ENCODE measurements at regions of chr12 and their contacts with region 1.

Region 1: GRCh38 chr12:93677195-93678064 is at the start of gene CRADD:
- DNase-seq: peak; percentile 66 to 99 (median 80)
- ATAC-seq: peak; percentile 94
- H3K4me3 ChIP-seq: peak within 1 kb of the TSS; percentile 71
- H3K4me3 Mint-ChIP-seq: peak within 1 kb of the TSS; percentile 97
- H3K27ac ChIP-seq: peak within 1 kb of the TSS; percentile 97 to 98
- H3K27ac Mint-ChIP-seq: peak within 1 kb of the TSS; percentile 100
- H3K4me1 ChIP-seq: peaks cover 24% of the 10 kb centered on the region
- H3K4me1 Mint-ChIP-seq: peaks cover 40% of the 10 kb centered on the region
- H3K27me3 ChIP-seq: peaks cover 7 to 9% of the 10 kb centered on the region in 2 experiments
- H3K27me3 Mint-ChIP-seq: peaks cover 15% of the 10 kb centered on the region
- CTCF ChIP-seq: no peak
- total RNA-seq, gene CRADD: 5.8 to 9.2 TPM

Region 2: GRCh38 chr12:92928962-92929915 is 748.2 kb before region 1 on chr12 and contains the start of gene EEA1:
- CTCF ChIA-PET with region 1: no interaction called
- POLR2A ChIA-PET with region 1: no interaction called
- intact Hi-C with region 1: loop called in 1 of 2 experiments (anchors 5 kb)
- DNase-seq: peak; percentile 88 to 97 (median 94)
- ATAC-seq: peak; percentile 77
- H3K4me3 ChIP-seq: peak within 1 kb of the TSS; percentile 81
- H3K4me3 Mint-ChIP-seq: peak within 1 kb of the TSS; percentile 91
- H3K27ac ChIP-seq: peak within 1 kb of the TSS; percentile 86 to 90
- H3K27ac Mint-ChIP-seq: peak within 1 kb of the TSS; percentile 94
- H3K4me1 ChIP-seq: peaks cover 23% of the 10 kb centered on the region
- H3K4me1 Mint-ChIP-seq: peaks cover 42% of the 10 kb centered on the region
- H3K27me3 ChIP-seq: no peaks in the 10 kb centered on the region
- H3K27me3 Mint-ChIP-seq: no peaks in the 10 kb centered on the region
- CTCF ChIP-seq: peak; percentile 28
- total RNA-seq, gene EEA1: 10.5 to 11.1 TPM

Region 3: GRCh38 chr12:93467351-93468007 is 210.0 kb before region 1 on chr12 and contains the start of gene MRPL42:
- CTCF ChIA-PET with region 1: interaction called, 5 read pairs
- POLR2A ChIA-PET with region 1: no interaction called
- intact Hi-C with region 1: loop called in 1 of 2 experiments (anchors 5 kb)
- DNase-seq: peak; percentile 84 to 94 (median 92)
- ATAC-seq: peak; percentile 95
- H3K4me3 ChIP-seq: peak within 1 kb of the TSS; percentile 92
- H3K4me3 Mint-ChIP-seq: peak within 1 kb of the TSS; percentile 92
- H3K27ac ChIP-seq: peak within 1 kb of the TSS; percentile 77 to 93
- H3K27ac Mint-ChIP-seq: peak within 1 kb of the TSS; percentile 95
- H3K4me1 ChIP-seq: peaks cover 25% of the 10 kb centered on the region
- H3K4me1 Mint-ChIP-seq: peaks cover 40% of the 10 kb centered on the region
- H3K27me3 ChIP-seq: no peaks in the 10 kb centered on the region
- H3K27me3 Mint-ChIP-seq: no peaks in the 10 kb centered on the region
- CTCF ChIP-seq: peak; percentile 82
- total RNA-seq, gene MRPL42: 39.0 to 39.3 TPM

Region 4: DNA sequence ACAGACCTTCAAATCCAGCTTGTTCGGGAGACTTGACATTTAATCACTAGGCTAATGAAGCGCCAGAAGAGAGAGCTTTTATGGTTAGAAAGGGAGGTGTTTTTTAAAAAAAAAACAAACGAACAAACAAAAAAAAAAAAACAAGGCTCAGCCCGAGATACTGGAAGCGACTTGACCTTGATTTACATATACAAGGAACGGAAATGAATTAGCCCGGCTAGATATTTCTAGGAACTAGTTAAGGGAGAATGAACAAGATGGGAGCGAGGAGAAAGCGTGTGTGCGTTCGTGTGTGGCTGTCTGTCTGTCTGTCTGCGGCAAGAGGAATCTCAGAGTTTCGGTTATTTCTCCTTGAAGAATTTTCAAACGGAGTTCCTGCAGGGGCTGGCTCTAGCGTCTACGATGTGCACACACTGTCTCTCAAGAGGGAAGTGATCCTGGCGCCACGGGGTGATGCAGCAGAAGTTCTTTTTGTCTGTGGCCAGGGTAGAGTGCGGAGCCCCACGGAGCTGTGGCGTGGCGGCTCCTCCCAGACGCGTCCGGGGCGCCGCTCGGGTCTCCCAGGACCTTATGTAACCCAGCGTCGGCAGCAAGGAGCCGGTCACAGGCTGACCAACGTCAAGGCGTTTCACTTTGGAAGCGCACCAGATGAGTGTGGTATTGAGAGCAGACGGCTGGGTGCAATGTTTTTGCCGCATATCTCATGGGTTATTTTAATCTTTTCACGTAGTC is 86.1 kb before region 1 on chr12:
- CTCF ChIA-PET with region 1: no interaction called
- POLR2A ChIA-PET with region 1: no interaction called
- intact Hi-C with region 1: loop called in 1 of 2 experiments (anchors 5 kb)
- DNase-seq: peak in 10 of 14 experiments; percentile 2 to 69 (median 34)
- ATAC-seq: peak; percentile 71
- H3K4me3 ChIP-seq: peak overlapping the region; percentile 49
- H3K4me3 Mint-ChIP-seq: peak overlapping the region; percentile 81
- H3K27ac ChIP-seq: no peak overlapping the region
- H3K27ac Mint-ChIP-seq: no peak overlapping the region
- H3K4me1 ChIP-seq: peaks cover 7% of the 10 kb centered on the region
- H3K4me1 Mint-ChIP-seq: peaks cover 14% of the 10 kb centered on the region
- H3K27me3 ChIP-seq: peaks cover 16 to 38% of the 10 kb centered on the region in 2 experiments
- H3K27me3 Mint-ChIP-seq: peaks cover 72% of the 10 kb centered on the region
- CTCF ChIP-seq: no peak

Region 5: GRCh38 chr12:94001691-94002090 is 324.3 kb after region 1 on chr12:
- CTCF ChIA-PET with region 1: no interaction called
- POLR2A ChIA-PET with region 1: no interaction called
- intact Hi-C with region 1: no loop called
- DNase-seq: no peak
- ATAC-seq: no peak
- H3K4me3 ChIP-seq: no peak overlapping the region
- H3K4me3 Mint-ChIP-seq: no peak overlapping the region
- H3K27ac ChIP-seq: no peak overlapping the region
- H3K27ac Mint-ChIP-seq: no peak overlapping the region
- H3K4me1 ChIP-seq: no peaks in the 10 kb centered on the region
- H3K4me1 Mint-ChIP-seq: peaks cover 7% of the 10 kb centered on the region
- H3K27me3 ChIP-seq: no peaks in the 10 kb centered on the region
- H3K27me3 Mint-ChIP-seq: peaks cover 3% of the 10 kb centered on the region
- CTCF ChIP-seq: no peak

Region 6: DNA sequence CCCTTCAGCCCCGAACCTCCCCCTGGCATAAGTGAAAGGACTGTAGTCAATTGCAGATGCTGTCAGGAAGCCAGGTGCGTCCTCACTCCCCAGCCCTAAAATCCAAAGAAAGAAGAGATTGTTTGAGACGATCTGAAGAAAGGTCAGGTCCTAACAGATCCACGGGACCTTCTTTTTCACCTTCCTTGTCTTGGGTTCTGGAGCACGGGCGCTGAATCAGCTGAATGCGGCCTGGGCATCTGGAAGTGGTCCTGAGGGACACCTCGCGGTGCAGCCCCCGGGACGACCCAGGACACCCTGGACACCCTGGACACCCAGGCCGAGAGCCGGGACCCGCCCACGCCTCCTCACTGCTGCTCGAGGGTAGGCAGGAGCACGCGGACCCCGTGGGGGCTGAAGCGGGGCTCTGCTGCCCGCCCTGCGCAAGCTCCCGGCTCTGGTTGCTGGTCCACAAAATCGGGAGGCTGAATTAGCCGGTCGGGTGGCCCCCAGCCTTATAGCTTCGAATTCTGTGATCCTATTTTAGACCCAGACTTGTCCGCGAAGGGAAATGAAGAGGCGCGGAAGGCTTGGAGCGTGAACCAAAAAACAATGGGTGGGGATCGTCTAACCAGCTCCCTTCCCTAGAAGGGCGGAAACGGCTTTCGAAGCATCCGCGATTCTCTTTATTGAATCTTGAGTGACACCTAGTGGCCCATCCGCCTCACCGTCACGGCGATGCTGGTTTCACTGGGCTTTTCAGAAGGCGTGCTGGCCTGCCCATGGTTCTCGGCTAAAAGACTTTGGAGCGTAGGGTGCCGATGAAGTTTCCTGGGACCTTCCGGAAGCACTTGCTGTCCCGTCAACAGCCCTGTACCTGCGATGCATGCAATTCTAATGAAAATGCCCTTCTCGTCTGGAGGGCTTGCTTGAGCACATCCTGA is 424.6 kb after region 1 on chr12:
- CTCF ChIA-PET with region 1: interaction called, 14 read pairs
- POLR2A ChIA-PET with region 1: interaction called, 14 read pairs
- intact Hi-C with region 1: loop called (anchors 2 to 5 kb)
- DNase-seq: peak; percentile 73 to 92 (median 79)
- ATAC-seq: peak; percentile 90
- H3K4me3 ChIP-seq: peak overlapping the region; percentile 86
- H3K4me3 Mint-ChIP-seq: peak overlapping the region; percentile 90
- H3K27ac ChIP-seq: peak overlapping the region in 1 of 2 donors; percentile 29
- H3K27ac Mint-ChIP-seq: peak overlapping the region; percentile 43
- H3K4me1 ChIP-seq: peaks cover 19% of the 10 kb centered on the region
- H3K4me1 Mint-ChIP-seq: peaks cover 5% of the 10 kb centered on the region
- H3K27me3 ChIP-seq: no peaks in the 10 kb centered on the region
- H3K27me3 Mint-ChIP-seq: peaks cover 15% of the 10 kb centered on the region
- CTCF ChIP-seq: peak; percentile 70

Region 7: GRCh38 chr12:95217377-95218149 is 1540.1 kb after region 1 on chr12 and contains the starts of genes FGD6 and VEZT:
- CTCF ChIA-PET with region 1: no interaction called
- POLR2A ChIA-PET with region 1: no interaction called
- intact Hi-C with region 1: loop called in 1 of 2 experiments (anchors 5 kb)
- DNase-seq: peak; percentile 94 to 99 (median 98)
- ATAC-seq: peak; percentile 90
- H3K4me3 ChIP-seq: peak within 1 kb of the TSS; percentile 86
- H3K4me3 Mint-ChIP-seq: peak within 1 kb of the TSS; percentile 94
- H3K27ac ChIP-seq: peak within 1 kb of the TSS; percentile 95 to 96
- H3K27ac Mint-ChIP-seq: peak within 1 kb of the TSS; percentile 88
- H3K4me1 ChIP-seq: peaks cover 12% of the 10 kb centered on the region
- H3K4me1 Mint-ChIP-seq: peaks cover 47% of the 10 kb centered on the region
- H3K27me3 ChIP-seq: no peaks in the 10 kb centered on the region
- H3K27me3 Mint-ChIP-seq: peaks cover 4% of the 10 kb centered on the region
- CTCF ChIP-seq: peak; percentile 65
- total RNA-seq, gene FGD6: 1.5 TPM
- total RNA-seq, gene VEZT: 52.6 to 57.2 TPM